ENCODE measurements at regions of chr10 and their contacts with region 1.

Region 1: GRCh38 chr10:20202337-20202736 is 386.1 kb downstream of the PLXDC2 start:
- DNase-seq: no peak
- H3K4me3 ChIP-seq: no peak overlapping the region
- CTCF ChIP-seq: no peak

Region 2: DNA sequence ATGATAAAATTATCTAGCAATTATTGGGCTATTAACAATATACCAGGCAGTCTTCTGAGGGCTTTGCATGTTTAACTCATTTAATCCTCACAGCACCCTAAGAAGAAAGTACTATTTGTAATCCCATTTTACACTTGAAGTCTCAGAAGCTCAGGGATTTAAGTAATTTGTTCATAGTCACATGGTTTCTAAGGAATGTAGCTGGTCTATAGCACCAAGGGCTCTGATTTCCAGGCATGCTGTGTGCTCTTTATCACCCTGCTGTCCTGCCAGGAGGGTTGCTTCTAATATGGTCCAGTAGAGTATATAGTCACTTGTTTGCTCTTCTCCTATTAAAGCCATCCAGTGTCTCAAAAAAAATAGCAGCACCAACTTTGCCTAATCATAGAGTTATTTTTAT is 31.1 kb after region 1 on chr10:
- in situ Hi-C with region 1: no loop called
- DNase-seq: no peak
- H3K4me3 ChIP-seq: no peak overlapping the region
- CTCF ChIP-seq: no peak

Region 3: DNA sequence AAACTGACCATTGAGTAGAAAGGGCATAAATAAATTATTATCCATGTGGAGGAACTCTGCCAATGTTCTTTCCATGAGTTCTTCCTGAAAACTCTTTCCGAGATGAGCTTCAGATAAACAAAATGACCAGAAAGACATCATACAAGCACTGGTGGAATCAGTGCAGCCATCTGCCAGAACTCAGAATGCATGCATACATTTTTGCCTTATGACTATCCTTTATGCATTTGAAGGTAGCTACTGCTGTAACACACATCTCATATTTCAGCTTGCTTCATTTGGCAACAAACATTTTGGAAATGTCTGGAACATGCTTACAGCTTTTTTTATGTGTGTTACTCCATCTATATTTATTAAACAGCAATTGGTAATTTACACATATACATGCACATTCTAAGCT is 62.8 kb after region 1 on chr10:
- in situ Hi-C with region 1: no loop called
- DNase-seq: no peak
- H3K4me3 ChIP-seq: no peak overlapping the region
- CTCF ChIP-seq: no peak

Region 4: GRCh38 chr10:20313665-20314064 is 111.3 kb after region 1 on chr10:
- in situ Hi-C with region 1: loop called (anchors 25 kb)
- DNase-seq: no peak
- H3K4me3 ChIP-seq: no peak overlapping the region
- CTCF ChIP-seq: no peak